ENCODE measurements at regions of chr16 and their contacts with region 1.

Region 1: DNA sequence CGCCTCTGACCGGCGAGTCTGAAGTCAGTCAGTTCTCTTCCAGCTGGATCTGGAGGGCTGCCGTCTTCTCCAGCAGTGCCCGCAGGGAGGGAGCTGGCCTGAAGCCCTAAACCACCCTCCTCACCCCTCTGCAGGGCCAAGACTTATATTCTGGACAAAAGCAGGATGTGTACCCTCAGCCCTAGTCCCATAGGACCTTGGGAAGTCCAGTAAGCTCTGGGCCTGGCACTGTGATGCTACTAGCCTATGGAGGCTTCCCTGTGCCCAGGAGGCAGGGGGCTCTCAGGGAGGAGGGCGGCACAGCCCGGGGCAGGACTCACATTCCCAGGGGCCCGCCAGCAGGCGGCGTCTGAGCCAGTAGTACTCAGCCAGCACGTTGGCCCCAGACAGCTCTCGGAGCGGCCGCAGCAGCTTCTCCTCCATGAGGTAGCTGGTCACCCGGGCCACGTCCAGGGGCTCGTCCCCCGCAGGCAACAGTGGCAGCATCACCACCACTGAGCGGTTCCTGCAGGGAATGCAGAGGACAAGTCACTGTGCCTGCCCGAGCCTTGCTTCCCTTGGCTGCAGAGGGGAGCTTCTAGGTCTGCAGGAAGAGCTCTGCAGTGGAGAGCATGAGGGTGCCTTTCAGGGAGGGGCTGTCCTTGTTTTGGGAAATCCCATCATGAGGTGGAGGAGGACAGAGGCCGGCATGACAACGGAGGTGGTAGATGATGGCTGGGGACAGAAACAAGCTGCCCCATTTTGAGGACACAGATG is 41.7 kb downstream of the RMI2 start:
- DNase-seq: no peak
- H3K4me3 ChIP-seq: no peak overlapping the region
- H3K27ac ChIP-seq: no peak overlapping the region
- H3K4me1 ChIP-seq: peaks cover 5% of the 10 kb centered on the region
- H3K27me3 ChIP-seq: no peaks in the 10 kb centered on the region
- CTCF ChIP-seq: no peak

Region 2: GRCh38 chr16:11155284-11155806 is 231.6 kb before region 1 on chr16:
- CTCF ChIA-PET with region 1: no interaction called
- dilution Hi-C with region 1: loop called (anchors 10 kb)
- in situ Hi-C with region 1: no loop called
- intact Hi-C with region 1: no loop called
- DNase-seq: peak; percentile 66
- H3K4me3 ChIP-seq: no peak overlapping the region
- H3K27ac ChIP-seq: no peak overlapping the region
- H3K4me1 ChIP-seq: no peaks in the 10 kb centered on the region
- H3K27me3 ChIP-seq: no peaks in the 10 kb centered on the region
- CTCF ChIP-seq: no peak

Region 3: GRCh38 chr16:11278681-11279628 is 108.0 kb before region 1 on chr16:
- CTCF ChIA-PET with region 1: no interaction called
- dilution Hi-C with region 1: loop called (anchors 5 kb)
- in situ Hi-C with region 1: no loop called
- intact Hi-C with region 1: no loop called
- DNase-seq: no peak
- H3K4me3 ChIP-seq: no peak overlapping the region
- H3K27ac ChIP-seq: no peak overlapping the region
- H3K4me1 ChIP-seq: no peaks in the 10 kb centered on the region
- H3K27me3 ChIP-seq: no peaks in the 10 kb centered on the region
- CTCF ChIP-seq: no peak

Region 4: DNA sequence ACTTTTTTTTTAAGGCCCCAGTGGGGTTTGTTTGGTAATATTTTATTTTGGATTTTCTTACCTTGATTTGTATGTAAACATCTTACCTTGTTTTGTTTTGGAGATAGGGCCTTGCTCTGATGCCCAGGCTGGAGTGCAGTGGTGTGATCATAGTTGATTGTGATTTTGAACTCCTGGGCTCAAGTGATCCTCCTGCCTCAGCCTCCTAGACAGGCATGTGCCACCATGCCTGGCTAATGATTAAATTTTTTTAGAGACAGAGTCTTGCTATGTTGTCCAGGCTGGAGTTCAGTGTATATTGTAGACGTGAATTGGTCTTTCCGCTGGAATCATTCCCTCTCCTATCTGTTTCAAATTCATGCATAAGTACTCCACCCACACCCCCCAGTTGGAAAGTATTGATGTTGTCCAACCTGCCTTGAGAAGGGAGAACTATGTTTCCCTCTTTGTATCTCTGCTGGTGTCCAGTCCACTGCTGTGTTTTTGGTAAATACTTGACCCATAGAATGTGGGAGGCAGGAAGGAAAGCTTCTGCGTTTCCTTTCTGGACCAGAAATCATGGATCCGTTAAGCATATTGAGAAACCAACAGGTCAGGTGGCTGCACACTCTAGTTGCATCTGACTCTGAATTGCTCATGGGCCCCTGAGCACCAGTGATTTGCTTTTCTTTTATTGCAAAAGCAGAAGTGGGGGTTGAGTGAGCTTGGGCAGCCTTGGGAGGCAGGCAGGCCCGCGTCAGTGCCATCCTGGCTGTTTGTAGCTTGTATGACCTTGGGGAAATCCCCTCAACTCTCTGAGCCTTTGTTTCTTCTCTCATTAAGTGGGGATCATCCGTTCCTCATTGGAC is 16.7 kb before region 1 on chr16:
- CTCF ChIA-PET with region 1: interaction called, 4 read pairs
- dilution Hi-C with region 1: no loop called
- in situ Hi-C with region 1: no loop called
- intact Hi-C with region 1: loop called (anchors 2 kb)
- DNase-seq: no peak
- H3K4me3 ChIP-seq: no peak overlapping the region
- H3K27ac ChIP-seq: no peak overlapping the region
- H3K4me1 ChIP-seq: no peaks in the 10 kb centered on the region
- H3K27me3 ChIP-seq: no peaks in the 10 kb centered on the region
- CTCF ChIP-seq: no peak